HEK293 (cell line): ENCODE measurements at regions of chr16 and their contacts with region 1.

Region 1: GRCh38 chr16:30874821-30875717 is 18.8 kb downstream of the BCL7C start:
- H3K4me3 ChIP-seq: peak overlapping the region; percentile 51
- H3K27ac ChIP-seq: peak overlapping the region; percentile 94
- H3K4me1 ChIP-seq: no peaks in the 10 kb centered on the region
- CTCF ChIP-seq: peak; percentile 46; the same call in 1 of the 2 replicates

Region 2: DNA sequence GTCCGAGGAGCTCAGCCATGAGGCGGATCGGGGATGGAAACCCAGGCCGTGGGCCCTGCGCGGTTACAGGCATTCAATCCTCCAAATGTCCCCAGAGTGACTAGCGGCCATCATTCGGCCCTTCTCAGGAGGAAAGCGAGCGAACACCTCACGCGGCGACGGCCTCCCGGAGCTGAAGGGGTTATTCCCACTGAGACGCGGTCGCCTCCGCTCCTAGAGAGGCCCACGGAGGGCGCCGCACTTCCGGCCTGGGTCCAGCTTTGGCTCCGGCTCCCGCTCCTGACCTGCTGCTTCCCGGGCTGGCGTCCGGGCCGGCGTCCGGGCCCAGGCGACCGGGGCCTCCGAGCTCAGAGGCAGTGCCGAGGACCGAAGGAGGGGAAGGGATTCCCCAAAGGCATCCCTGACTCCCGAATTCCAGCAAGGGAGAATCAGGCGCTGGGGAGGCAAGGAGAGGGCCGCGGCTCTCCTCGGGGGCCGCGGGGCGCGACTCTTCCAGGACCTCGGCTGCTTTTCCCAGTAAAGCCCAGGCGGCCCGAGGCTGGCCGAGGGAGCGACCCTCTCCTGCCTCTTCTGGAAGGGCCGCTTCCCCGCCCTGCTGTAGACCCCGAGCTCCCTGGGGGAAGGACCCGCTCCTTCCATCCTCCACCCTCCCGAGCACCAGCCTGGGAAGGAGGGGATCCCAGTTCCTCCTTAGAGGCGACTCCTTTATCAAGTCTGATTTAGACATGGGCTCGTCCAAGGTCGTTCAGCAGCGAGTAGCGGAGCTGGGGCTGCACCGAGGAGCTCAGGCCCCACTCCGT is 69.5 kb before region 1 on chr16:
- CTCF ChIA-PET with region 1: interaction called, 4 read pairs
- POLR2A ChIA-PET with region 1: interaction called, 23 read pairs
- H3K4me3 ChIP-seq: peak overlapping the region; percentile 74
- H3K27ac ChIP-seq: peak overlapping the region; percentile 86
- H3K4me1 ChIP-seq: no peaks in the 10 kb centered on the region
- CTCF ChIP-seq: peak; percentile 79

Region 3: GRCh38 chr16:30813821-30814189 is 61.3 kb before region 1 on chr16:
- CTCF ChIA-PET with region 1: interaction called, 12 read pairs
- POLR2A ChIA-PET with region 1: interaction called, 8 read pairs
- H3K4me3 ChIP-seq: peak overlapping the region; percentile 29
- H3K27ac ChIP-seq: peak overlapping the region; percentile 32; the same call in 1 of the 2 replicates
- H3K4me1 ChIP-seq: 0 out of 2 replicates have a peak, but pooled peaks cover 2% of the 10 kb centered on the region
- CTCF ChIP-seq: no peak

Region 4: GRCh38 chr16:30893744-30894539 is 18.9 kb after region 1 on chr16 and contains the start of gene BCL7C:
- CTCF ChIA-PET with region 1: interaction called, 3 read pairs
- POLR2A ChIA-PET with region 1: interaction called, 16 read pairs
- H3K4me3 ChIP-seq: peak within 1 kb of the TSS; percentile 84
- H3K27ac ChIP-seq: peak within 1 kb of the TSS; percentile 75
- H3K4me1 ChIP-seq: no peaks in the 10 kb centered on the region; the same call in 1 of the 2 replicates
- CTCF ChIP-seq: peak; percentile 93

Region 5: DNA sequence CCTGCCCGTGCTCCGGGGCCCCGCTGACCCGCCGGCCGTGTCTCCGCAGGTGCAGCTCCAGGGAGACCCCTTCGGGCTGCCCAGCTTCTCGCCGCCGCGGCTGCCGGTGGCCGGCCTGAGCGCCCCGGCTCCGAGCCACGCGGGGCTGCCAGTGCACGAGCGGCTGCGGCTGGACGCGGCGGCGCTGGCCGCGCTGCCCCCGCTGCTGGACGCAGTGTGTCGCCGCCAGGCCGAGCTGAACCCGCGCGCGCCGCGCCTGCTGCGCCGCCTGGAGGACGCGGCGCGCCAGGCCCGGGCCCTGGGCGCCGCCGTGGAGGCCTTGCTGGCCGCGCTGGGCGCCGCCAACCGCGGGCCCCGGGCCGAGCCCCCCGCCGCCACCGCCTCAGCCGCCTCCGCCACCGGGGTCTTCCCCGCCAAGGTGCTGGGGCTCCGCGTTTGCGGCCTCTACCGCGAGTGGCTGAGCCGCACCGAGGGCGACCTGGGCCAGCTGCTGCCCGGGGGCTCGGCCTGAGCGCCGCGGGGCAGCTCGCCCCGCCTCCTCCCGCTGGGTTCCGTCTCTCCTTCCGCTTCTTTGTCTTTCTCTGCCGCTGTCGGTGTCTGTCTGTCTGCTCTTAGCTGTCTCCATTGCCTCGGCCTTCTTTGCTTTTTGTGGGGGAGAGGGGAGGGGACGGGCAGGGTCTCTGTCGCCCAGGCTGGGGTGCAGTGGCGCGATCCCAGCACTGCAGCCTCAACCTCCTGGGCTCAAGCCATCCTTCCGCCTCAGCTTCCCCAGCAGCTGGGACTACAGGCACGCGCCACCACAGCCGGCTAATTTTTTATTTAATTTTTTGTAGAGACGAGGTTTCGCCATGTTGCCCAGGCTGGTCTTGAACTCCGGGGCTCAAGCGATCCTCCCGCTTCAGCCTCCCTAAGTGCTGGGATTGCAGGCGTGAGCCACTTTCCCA is 27.2 kb after region 1 on chr16:
- CTCF ChIA-PET with region 1: interaction called, 14 read pairs
- POLR2A ChIA-PET with region 1: interaction called, 35 read pairs
- H3K4me3 ChIP-seq: peak overlapping the region; percentile 51
- H3K27ac ChIP-seq: peak overlapping the region; percentile 77
- H3K4me1 ChIP-seq: no peaks in the 10 kb centered on the region
- CTCF ChIP-seq: peak; percentile 19; the same call in 1 of the 2 replicates